ENCODE measurements at regions of chr17 and their contacts with region 1.

Region 1: DNA sequence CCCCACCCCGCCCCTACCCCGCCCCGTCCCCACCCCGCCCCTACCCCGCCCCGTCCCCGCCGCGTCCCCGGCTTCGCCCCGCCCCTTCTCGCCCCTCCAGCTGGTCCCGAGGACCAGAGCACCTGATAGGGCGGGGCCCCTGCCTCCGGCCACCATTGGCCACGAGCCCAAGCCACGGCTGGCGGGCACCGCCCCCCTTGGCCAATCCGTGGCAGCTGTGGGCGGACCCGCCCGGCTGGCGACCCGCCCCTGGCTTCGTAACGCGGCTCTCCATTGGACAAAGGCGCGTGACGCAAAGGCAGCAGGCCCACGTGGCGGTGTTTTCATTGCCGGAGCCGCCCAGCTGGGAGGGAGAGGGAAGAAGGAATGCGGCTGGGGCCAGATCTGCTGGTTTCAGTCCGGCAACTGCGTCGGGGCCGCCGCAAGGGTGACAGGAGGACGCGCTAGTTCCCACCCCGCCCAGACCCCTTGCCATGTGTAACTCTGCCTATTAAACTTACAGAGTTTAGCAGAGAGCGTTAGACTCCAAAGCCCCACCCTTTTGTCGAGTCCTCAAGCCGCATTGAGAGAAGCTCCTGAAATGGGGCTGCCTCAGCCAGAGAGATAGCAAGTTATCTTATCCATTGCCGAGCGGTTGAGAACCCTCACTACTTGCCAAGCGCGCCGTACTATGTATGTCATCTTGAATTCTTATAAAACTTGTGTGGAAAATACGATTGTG is 403 bp upstream of the WIPI1 start:
- DNase-seq: peak; percentile 94
- H3K4me3 ChIP-seq: peak overlapping the region; percentile 68
- H3K27ac ChIP-seq: peak overlapping the region; percentile 76
- H3K27me3 ChIP-seq: peaks cover 16% of the 10 kb centered on the region
- CTCF ChIP-seq: no peak

Region 2: GRCh38 chr17:67974598-67975066 is 483.1 kb before region 1 on chr17:
- CTCF ChIA-PET with region 1: no interaction called
- POLR2A ChIA-PET with region 1: no interaction called
- DNase-seq: no peak
- H3K4me3 ChIP-seq: no peak overlapping the region
- H3K27ac ChIP-seq: no peak overlapping the region
- H3K27me3 ChIP-seq: no peaks in the 10 kb centered on the region
- CTCF ChIP-seq: no peak

Region 3: GRCh38 chr17:68296211-68297191 is 161.2 kb before region 1 on chr17:
- CTCF ChIA-PET with region 1: no interaction called
- POLR2A ChIA-PET with region 1: no interaction called
- DNase-seq: no peak
- H3K4me3 ChIP-seq: no peak overlapping the region
- H3K27ac ChIP-seq: no peak overlapping the region
- H3K27me3 ChIP-seq: peaks cover 15% of the 10 kb centered on the region
- CTCF ChIP-seq: no peak

Region 4: DNA sequence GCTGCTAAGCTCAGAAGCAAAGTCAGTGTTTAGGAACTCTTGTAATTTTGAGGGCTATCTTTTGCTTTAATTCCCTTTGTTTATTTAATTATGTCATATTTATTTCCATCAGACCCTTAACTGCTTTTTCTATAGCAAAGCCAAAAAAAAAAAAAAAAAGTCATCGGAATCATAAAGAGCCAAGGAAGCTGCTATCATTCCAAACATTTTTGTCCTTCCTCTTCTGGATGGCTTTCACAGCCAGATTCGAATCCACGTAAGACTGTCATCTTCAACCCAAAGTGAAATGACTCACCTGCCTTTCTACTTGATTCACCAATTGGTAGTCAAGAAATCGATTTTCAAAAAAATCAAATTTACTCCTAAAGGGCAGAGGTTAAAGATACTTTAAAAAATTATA is 38.8 kb before region 1 on chr17:
- CTCF ChIA-PET with region 1: no interaction called
- POLR2A ChIA-PET with region 1: no interaction called
- DNase-seq: no peak
- H3K4me3 ChIP-seq: no peak overlapping the region
- H3K27ac ChIP-seq: no peak overlapping the region
- H3K27me3 ChIP-seq: no peaks in the 10 kb centered on the region
- CTCF ChIP-seq: no peak

Region 5: DNA sequence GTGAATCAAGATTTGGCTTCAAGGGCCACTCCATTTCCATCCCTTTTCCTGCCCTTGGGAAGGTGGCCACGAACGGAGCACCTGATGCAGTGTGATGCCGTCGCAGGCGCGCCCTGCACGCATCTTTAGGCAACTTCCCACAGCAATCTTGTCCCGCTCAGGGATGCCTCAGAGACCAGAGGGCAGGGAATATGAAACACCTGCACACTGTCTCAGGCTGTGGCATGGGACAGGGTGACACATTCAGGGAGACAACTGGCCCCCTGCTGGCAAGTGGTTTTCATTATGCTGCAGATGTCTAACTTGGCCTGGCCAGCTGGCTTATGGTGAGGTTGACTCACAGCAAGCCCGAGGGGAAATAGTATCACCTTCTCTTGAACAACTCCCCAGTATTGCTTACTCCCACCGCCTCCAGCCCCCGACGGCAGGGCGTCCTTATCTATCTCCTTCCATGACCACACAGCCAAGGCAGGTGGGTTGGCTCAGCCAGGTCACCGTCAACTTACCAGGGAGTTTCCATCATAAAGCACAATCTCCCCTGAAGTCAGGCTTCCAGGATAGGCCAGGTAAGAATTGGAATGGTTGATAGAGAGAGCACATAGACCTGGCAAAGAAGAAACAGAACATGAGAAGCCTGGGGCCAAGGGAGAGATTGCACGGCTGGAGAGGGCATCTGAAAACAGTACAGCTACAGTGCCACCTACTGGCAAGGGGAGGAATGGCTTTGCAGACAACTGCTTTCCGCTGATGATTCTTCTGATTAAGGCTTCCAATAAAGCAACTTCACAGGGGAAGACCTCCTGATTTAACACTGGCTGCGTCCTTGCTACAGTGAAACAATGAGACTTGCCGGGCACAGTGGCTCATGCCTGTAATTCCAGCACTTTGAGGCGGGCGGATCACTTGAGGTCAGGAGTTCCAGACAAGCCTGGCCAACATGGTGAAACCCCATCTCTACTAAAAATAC is 21.5 kb before region 1 on chr17:
- CTCF ChIA-PET with region 1: interaction called, 16 read pairs
- POLR2A ChIA-PET with region 1: interaction called, 4 read pairs
- DNase-seq: peak; percentile 52
- H3K4me3 ChIP-seq: no peak overlapping the region
- H3K27ac ChIP-seq: peak overlapping the region; percentile 31
- H3K27me3 ChIP-seq: no peaks in the 10 kb centered on the region
- CTCF ChIP-seq: peak; percentile 94

Measured in AG04450 (cell line).